CD14-positive monocyte (primary cell): ENCODE measurements at regions of chr5 and their contacts with region 1.

Region 1: DNA sequence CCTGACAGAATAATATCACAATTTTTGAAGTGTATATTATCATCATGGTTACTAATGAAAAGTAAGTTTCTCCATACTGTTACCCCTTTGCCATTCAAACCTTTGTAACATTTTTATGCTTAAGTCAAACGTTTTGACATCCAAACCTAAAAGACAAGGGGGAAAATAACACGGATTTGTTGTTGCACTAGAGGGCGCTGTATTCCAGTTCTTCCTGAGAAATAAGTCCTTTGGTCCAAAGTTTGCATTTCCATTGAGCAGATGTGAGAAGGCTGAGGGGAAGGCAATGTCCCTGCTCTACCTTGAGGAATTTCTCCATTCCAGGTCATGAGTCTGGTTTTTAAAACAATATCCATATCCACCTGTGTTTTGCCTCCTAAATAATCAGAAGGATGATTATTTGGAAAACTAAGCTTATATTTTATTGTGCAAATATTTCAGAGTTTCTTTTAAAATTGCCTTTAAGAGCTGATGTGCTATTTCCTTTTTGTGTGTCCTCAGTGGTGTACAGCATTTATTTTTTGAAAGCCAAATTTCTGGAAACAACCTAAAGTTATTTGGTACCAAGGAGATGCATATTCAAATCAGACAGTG is 9.7 kb downstream of the LECT2 start:
- DNase-seq: peak; percentile 39 to 65 (median 64)
- H3K4me3 ChIP-seq: no peak overlapping the region
- H3K4me3 Mint-ChIP-seq: no peak overlapping the region
- H3K27ac ChIP-seq: no peak overlapping the region
- H3K27ac Mint-ChIP-seq: no peak overlapping the region
- H3K4me1 ChIP-seq: no peaks in the 10 kb centered on the region
- H3K4me1 Mint-ChIP-seq: no peaks in the 10 kb centered on the region
- H3K27me3 ChIP-seq: peaks cover 12 to 23% of the 10 kb centered on the region in 2 donors
- H3K27me3 Mint-ChIP-seq: peaks cover 4 to 14% (median 8%) of the 10 kb centered on the region in 3 donors
- CTCF ChIP-seq: peak; percentile 81

Region 2: GRCh38 chr5:136062366-136063274 is 117.6 kb after region 1 on chr5:
- intact Hi-C with region 1: loop called in 1 of 2 experiments (anchors 5 kb)
- DNase-seq: peak; percentile 11 to 33 (median 18)
- H3K4me3 ChIP-seq: no peak overlapping the region
- H3K4me3 Mint-ChIP-seq: no peak overlapping the region
- H3K27ac ChIP-seq: no peak overlapping the region
- H3K27ac Mint-ChIP-seq: peak overlapping the region in 1 of 7 donors; percentile 57
- H3K4me1 ChIP-seq: no peaks in the 10 kb centered on the region
- H3K4me1 Mint-ChIP-seq: peaks cover 2% of the 10 kb centered on the region
- H3K27me3 ChIP-seq: no peaks in the 10 kb centered on the region
- H3K27me3 Mint-ChIP-seq: peaks cover 3 to 4% (median 3%) of the 10 kb centered on the region in 3 donors
- CTCF ChIP-seq: peak; percentile 52

Region 3: DNA sequence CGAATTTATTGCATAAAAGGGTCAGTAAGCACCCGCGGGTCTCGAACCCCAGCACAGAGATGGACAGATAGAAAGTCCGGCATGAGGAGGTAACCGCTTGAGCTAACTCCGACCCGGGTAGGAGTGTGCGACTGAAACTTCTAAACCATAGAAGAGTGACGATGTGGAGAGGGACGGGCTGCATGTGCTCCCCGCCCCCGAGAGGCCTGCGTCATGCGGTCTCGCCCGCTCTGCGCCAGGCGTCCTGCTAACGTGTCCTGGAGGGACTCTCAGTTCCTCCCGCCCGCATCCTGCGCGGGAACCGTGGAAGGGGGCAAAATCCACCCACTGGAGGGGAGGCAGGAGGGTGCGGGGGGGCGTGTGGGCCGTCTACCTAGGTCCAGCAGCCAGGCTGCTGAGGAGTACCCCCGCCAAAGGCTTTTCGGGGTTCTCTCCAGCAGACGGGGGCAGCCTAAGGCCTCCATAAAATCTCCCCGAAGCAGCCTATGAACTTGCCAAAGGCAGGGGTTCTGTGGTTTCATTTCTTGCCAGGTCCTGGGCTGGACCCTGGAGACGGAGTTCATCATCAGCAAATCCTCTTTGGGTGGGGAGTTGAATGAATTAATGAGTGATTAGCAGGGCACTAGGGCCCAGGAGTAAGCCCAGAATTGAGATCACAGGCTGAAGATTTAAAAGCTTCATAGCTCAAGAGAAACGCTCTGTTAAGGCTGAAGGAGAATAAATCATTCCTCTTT is 135.6 kb after region 1 on chr5:
- intact Hi-C with region 1: loop called (anchors 2 to 5 kb)
- DNase-seq: peak; percentile 71 to 74 (median 71)
- H3K4me3 ChIP-seq: peak overlapping the region in 2 of 3 experiments; percentile 8 to 51
- H3K4me3 Mint-ChIP-seq: peak overlapping the region; percentile 65 to 93
- H3K27ac ChIP-seq: no peak overlapping the region
- H3K27ac Mint-ChIP-seq: peak overlapping the region in 5 of 7 donors; percentile 6 to 74 (median 28)
- H3K4me1 ChIP-seq: peaks cover 13 to 17% of the 10 kb centered on the region in 2 donors
- H3K4me1 Mint-ChIP-seq: peaks cover 11% of the 10 kb centered on the region
- H3K27me3 ChIP-seq: peaks cover 30 to 60% of the 10 kb centered on the region in 2 donors
- H3K27me3 Mint-ChIP-seq: peaks cover 40 to 56% (median 40%) of the 10 kb centered on the region in 3 donors
- CTCF ChIP-seq: no peak

Region 4: DNA sequence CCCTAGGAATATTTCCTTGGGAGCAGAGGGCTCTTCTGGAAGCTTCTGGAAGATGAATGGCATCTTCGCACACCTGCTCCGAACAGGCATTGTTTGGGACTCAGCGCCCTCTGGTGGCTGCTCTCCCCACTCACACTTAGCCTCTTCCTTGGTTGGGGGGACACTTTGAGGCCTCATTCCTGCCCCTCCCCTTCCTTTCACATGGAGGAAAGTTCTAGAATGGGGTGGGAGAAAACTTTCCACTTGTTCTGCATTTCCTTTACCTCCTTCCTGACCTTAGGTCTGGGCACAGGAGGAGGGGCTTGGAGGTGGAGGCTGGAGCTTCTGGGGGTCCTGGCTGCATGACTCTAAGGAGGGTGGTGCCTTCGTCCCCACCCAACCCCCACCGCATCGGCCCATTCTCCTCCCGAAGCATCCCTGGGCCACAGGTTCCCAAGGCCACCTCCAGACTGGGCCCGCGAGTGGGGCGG is 267.2 kb after region 1 on chr5:
- intact Hi-C with region 1: loop called (anchors 5 to 10 kb)
- DNase-seq: peak; percentile 18 to 37 (median 32)
- H3K4me3 ChIP-seq: no peak overlapping the region
- H3K4me3 Mint-ChIP-seq: no peak overlapping the region
- H3K27ac ChIP-seq: no peak overlapping the region
- H3K27ac Mint-ChIP-seq: peak overlapping the region in 1 of 7 donors; percentile 18
- H3K4me1 ChIP-seq: no peaks in the 10 kb centered on the region
- H3K4me1 Mint-ChIP-seq: peaks cover 3% of the 10 kb centered on the region
- H3K27me3 ChIP-seq: no peaks in the 10 kb centered on the region
- H3K27me3 Mint-ChIP-seq: peaks cover 14 to 16% (median 15%) of the 10 kb centered on the region in 3 donors
- CTCF ChIP-seq: peak; percentile 96